ENCODE measurements at regions of chr12 and their contacts with region 1.

Region 1: GRCh38 chr12:113208041-113208934 is 13.0 kb upstream of the TPCN1 start:
- DNase-seq: peak; percentile 64
- ATAC-seq: peak; percentile 81
- H3K4me3 Mint-ChIP-seq: peak overlapping the region; percentile 76
- H3K27ac Mint-ChIP-seq: peak overlapping the region; percentile 98
- H3K4me1 Mint-ChIP-seq: peaks cover 69% of the 10 kb centered on the region
- H3K27me3 Mint-ChIP-seq: no peaks in the 10 kb centered on the region
- CTCF ChIP-seq: no peak

Region 2: GRCh38 chr12:113135178-113136127 is 72.8 kb before region 1 on chr12 and contains the start of gene RASAL1:
- CTCF ChIA-PET with region 1: no interaction called
- POLR2A ChIA-PET with region 1: no interaction called
- intact Hi-C with region 1: no loop called
- DNase-seq: peak; percentile 64
- ATAC-seq: peak; percentile 84
- H3K4me3 Mint-ChIP-seq: peak within 1 kb of the TSS; percentile 77
- H3K27ac Mint-ChIP-seq: peak within 1 kb of the TSS; percentile 80
- H3K4me1 Mint-ChIP-seq: peaks cover 30% of the 10 kb centered on the region
- H3K27me3 Mint-ChIP-seq: peaks cover 11% of the 10 kb centered on the region
- CTCF ChIP-seq: no peak
- total RNA-seq, gene RASAL1: 4.9 and 7.1 TPM in 2 replicates

Region 3: DNA sequence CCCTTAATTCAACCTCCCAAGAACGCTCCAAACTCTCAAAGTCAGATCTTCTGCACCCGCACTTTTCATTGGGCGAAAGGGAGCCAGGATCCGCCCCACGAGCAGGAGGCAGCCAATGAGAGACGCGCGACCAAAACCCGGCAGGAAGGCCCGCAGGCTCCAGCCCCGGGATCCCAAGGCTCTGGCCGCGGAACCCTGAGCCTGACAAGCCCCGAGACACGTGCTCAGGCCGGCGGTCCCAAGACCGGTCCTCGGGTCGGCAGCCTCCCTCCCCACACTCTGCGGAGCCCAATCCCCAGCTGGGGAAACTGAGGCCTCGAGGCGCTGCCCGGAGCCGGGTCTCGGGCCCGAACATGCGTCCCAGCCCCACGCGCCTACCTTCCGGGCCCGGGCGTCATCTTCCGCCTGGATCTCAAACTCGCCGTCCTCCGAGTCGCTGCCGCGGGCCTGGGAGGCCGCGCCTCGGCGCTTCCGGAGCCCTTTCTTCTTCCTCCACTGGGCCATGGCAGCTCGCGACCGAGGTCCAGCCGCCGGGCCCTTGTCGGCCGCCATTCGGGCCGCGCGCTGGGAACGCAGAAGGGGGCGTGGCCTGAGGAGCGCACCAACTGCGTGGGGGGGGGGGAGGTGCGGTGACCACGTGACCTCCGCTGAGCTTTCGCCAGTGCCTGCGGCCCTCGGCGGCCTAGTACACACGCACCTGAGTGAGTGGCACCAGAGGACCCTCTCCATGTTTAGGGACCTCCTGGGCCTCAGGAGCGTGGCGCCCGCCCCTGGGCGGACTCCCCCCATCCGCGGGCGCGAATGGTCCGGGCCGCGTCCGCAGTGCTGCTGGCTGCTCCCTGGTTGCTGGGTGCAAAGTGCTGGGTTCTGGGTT is 23.2 kb before region 1 on chr12 and contains the starts of genes DDX54 and RITA1:
- CTCF ChIA-PET with region 1: no interaction called
- POLR2A ChIA-PET with region 1: interaction called, 42 read pairs
- intact Hi-C with region 1: loop called (anchors 1 kb)
- DNase-seq: peak; percentile 87
- ATAC-seq: peak; percentile 83
- H3K4me3 Mint-ChIP-seq: peak within 1 kb of the TSS; percentile 93
- H3K27ac Mint-ChIP-seq: peak within 1 kb of the TSS; percentile 94
- H3K4me1 Mint-ChIP-seq: peaks cover 39% of the 10 kb centered on the region
- H3K27me3 Mint-ChIP-seq: no peaks in the 10 kb centered on the region
- CTCF ChIP-seq: no peak
- total RNA-seq, gene DDX54: 115 TPM in 2 replicates
- total RNA-seq, gene RITA1: 15.5 and 18.2 TPM in 2 replicates

Region 4: DNA sequence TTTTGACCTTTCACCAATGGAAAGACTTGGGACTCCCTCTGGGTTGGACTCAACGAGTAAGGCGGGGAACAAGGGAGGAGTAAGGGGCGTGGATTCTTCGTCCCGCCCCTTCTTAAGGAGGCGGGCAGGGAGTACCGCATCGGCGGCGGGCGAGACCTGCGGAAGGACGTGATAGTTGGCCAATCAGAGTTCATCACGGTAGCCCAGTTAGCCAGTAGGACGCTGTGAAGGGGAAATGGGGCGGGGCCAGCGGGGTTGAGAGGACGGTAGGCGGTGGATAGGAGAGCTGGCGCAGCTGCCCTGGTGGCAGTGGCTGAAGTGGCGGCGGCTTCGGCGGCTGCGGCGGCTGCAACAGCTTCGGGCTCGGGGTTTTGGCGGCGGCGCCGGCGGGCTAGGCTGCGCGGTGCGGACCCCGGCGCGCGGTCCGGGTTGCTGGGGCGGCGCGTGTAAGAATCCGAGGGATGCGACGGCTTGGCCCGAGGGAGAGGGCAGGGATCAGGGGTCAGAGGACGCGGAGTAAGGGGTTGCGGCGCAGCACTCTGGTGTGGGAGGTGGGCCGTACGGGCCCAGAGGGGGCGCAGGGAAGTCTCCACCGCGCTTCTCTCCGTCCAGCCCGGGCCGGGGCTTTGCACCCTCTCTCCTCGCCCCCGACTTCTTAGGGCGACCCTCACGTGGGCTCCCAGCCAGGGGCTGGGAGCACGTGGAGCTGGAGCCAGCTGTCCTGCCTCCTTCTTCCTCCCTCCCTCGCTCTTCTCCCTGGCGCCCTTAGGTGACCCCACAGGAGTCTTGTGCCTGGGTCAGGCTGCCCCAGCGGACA is 13.1 kb after region 1 on chr12 and contains the start of gene TPCN1:
- CTCF ChIA-PET with region 1: interaction called, 6 read pairs
- POLR2A ChIA-PET with region 1: interaction called, 287 read pairs
- intact Hi-C with region 1: loop called (anchors 1 kb)
- DNase-seq: peak; percentile 95
- ATAC-seq: peak; percentile 91
- H3K4me3 Mint-ChIP-seq: peak within 1 kb of the TSS; percentile 94
- H3K27ac Mint-ChIP-seq: peak within 1 kb of the TSS; percentile 94
- H3K4me1 Mint-ChIP-seq: peaks cover 45% of the 10 kb centered on the region
- H3K27me3 Mint-ChIP-seq: no peaks in the 10 kb centered on the region
- CTCF ChIP-seq: no peak
- total RNA-seq, gene TPCN1: 107 and 126 TPM in 2 replicates

Region 5: GRCh38 chr12:113232840-113233585 is 24.7 kb after region 1 on chr12:
- CTCF ChIA-PET with region 1: interaction called, 32 read pairs
- POLR2A ChIA-PET with region 1: interaction called, 277 read pairs
- intact Hi-C with region 1: loop called (anchors 1 kb)
- DNase-seq: peak; percentile 73
- ATAC-seq: peak; percentile 78
- H3K4me3 Mint-ChIP-seq: peak overlapping the region; percentile 76
- H3K27ac Mint-ChIP-seq: peak overlapping the region; percentile 95
- H3K4me1 Mint-ChIP-seq: peaks cover 87% of the 10 kb centered on the region
- H3K27me3 Mint-ChIP-seq: no peaks in the 10 kb centered on the region
- CTCF ChIP-seq: no peak

Region 6: GRCh38 chr12:113244478-113244958 is 36.2 kb after region 1 on chr12:
- CTCF ChIA-PET with region 1: no interaction called
- POLR2A ChIA-PET with region 1: interaction called, 17 read pairs
- intact Hi-C with region 1: no loop called
- DNase-seq: no peak
- ATAC-seq: no peak
- H3K4me3 Mint-ChIP-seq: no peak overlapping the region
- H3K27ac Mint-ChIP-seq: no peak overlapping the region
- H3K4me1 Mint-ChIP-seq: peaks cover 27% of the 10 kb centered on the region
- H3K27me3 Mint-ChIP-seq: no peaks in the 10 kb centered on the region
- CTCF ChIP-seq: no peak